GM18951 (cell line): ENCODE measurements at regions of chr18 and their contacts with region 1.

Region 1: DNA sequence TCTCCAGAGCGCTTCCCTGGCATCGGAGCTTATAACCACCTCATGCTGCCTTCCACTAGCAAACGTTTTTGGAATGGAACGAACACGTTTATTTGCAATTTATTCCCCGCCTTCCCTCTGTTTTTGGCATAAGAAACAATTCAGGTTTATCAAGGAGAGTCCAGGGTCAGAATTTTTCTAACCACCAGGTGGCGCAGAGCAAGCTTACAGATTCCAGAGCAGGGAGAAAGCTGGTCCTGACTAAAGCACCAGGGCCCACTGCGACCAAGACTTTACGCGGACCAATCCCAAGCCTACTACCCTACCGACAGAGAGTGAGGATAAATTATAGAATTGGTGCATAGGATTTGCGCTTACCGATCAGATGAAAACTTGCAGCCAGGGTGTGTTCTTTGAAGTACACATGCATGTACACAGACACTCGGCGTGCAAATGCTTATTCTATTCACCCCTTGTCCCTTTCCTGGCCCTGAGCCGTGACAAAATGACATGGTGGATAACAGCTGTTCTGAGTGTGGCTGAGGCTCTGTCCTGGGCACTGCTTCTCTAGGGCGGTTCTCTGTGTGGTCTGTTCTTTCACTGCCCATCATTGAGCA is 34.7 kb downstream of the NAPG start:
- POLR2A ChIP-seq: no peak

Region 2: GRCh38 chr18:10670856-10671255 is 110.3 kb after region 1 on chr18:
- in situ Hi-C with region 1: loop called (anchors 10 kb)
- POLR2A ChIP-seq: no peak